ENCODE measurements at regions of chr17 and their contacts with region 1.

Region 1: DNA sequence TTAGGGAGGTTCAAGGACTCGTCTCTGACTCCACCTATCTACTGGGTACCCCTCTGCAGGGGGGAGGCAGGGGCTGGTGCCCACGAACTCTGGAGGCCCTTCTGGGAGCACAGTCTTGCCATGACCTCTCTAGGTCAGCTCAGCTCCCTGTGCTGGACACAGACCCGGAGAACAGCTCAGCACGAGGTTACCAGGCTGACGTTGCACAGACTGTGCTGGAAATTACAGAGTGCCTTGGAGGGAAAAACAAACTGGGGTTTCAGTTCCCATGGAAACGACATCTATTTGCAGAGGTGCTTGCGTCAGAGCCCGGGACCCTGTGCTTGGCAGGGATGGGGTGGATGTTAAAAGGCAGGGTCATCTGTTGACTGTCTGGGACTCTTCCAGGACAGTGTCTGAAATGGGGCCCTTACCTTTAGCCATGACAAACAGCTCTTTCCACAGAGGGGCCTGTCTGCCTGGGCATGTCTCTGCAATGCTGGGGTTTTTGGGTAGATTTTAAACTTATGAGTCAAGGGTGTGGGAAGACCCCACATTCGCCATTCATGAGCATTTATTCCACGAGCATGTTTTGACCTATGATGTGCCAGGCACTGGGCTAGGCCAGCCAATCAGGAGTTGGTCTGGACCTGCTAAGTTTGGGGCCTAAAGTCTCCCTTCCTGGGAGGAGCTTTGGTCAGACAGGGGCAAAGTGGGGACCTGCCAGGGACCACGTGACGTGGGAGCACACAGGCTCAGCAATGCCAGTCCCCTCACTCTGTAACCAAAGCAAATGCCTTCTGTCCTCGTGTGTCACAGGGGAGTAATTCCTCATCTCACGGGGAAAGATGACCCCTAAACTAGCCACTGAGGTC is 22.5 kb downstream of the CCR7 start:
- DNase-seq: peak; percentile 90

Region 2: GRCh38 chr17:40474419-40475002 is 68.3 kb before region 1 on chr17:
- intact Hi-C with region 1: no loop called
- DNase-seq: no peak

Region 3: GRCh38 chr17:40553694-40554534 is 11.1 kb after region 1 on chr17:
- intact Hi-C with region 1: loop called (anchors 1 kb)
- DNase-seq: peak; percentile 82